ENCODE measurements at regions of chr9 and their contacts with region 1.

Region 1: DNA sequence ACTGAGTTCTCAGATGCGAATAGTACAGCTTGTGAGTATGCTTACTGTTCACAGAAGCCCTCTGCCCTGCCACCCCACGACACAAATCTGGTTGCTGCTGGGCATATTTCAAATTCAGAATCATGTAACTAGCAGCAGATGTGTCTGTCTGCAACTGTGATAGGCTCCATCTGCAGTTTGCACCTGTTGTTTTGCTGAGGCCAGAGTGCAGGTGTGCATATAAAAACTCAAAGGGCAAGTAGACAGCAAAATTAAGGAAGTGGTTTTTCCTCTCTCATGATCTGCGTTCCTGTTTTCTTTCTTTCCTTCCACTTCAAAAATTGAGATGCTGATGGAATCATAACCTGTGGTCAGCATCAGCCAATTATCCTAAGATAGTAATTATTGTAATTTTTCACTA is 1000.5 kb downstream of the PTPRD start:
- ATAC-seq: no peak
- H3K4me3 ChIP-seq: no peak overlapping the region
- H3K27ac ChIP-seq: no peak overlapping the region
- H3K4me1 ChIP-seq: no peaks in the 10 kb centered on the region

Region 2: GRCh38 chr9:9336101-9336500 is 276.2 kb before region 1 on chr9:
- in situ Hi-C with region 1: no loop called
- ATAC-seq: no peak
- H3K4me3 ChIP-seq: no peak overlapping the region
- H3K27ac ChIP-seq: no peak overlapping the region
- H3K4me1 ChIP-seq: peaks cover 10 to 22% of the 10 kb centered on the region in 2 donors

Region 3: DNA sequence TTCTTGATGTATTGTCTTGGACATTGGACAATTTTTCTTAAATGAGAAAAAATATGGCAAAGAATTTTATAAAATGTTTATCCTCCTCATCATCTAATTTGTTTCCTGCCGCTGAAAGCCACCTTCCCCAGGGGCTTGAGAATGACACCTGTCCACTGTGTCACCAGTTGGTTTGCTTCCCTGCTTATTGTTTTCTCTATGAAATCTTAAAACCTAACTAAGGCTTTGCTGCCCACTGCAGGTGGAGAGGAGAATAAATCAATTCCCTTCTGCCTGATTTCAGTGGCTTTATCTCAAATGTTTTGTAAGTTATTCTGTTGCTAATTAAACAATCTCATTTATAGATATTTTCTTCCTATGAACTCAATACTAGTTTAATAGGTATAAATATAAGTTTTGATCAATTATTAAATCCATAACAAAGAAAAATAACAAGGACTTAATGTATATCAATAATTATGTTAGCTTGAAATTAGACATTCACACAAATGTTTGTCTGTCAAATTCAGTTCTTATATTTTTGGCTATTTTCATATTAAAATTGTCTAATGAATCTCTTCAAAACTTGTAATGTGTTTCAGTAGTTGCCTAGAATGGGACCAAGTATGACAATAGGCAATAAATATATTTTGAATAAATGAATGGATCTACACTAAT is 178.1 kb after region 1 on chr9:
- in situ Hi-C with region 1: loop called in 1 of 9 experiments (anchors 25 kb)
- ATAC-seq: peak in 2 of 8 experiments; percentile 27 to 29
- H3K4me3 ChIP-seq: no peak overlapping the region
- H3K27ac ChIP-seq: no peak overlapping the region
- H3K4me1 ChIP-seq: peaks cover 0 to 3% of the 10 kb centered on the region in 2 donors